GM10248 (cell line): ENCODE measurements at regions of chr2 and their contacts with region 1.

Region 1: GRCh38 chr2:127094509-127095366 is 12.2 kb downstream of the BIN1 start:
- DNase-seq: no peak
- CTCF ChIP-seq: no peak

Region 2: DNA sequence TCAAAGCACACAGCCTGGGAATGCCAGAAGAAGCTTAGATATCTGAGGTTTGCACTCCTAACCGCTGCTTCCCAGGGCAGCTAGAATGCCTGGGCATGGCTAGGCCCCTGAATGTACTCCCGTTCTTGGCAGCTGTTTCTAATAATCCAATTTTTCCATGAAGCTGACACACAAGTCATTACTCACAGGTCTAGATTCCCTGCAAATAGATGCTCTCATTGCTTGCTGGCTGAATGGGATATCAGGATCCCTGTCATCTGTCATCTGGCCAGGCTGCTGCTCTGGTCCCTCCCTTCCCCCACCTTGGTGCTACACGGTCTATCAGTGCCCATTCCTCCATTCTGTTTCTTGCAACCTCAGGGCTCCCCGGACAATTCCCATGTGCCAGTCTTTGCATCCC is 236.7 kb before region 1 on chr2:
- CTCF ChIA-PET with region 1: no interaction called
- POLR2A ChIA-PET with region 1: no interaction called
- DNase-seq: no peak
- CTCF ChIP-seq: no peak

Region 3: DNA sequence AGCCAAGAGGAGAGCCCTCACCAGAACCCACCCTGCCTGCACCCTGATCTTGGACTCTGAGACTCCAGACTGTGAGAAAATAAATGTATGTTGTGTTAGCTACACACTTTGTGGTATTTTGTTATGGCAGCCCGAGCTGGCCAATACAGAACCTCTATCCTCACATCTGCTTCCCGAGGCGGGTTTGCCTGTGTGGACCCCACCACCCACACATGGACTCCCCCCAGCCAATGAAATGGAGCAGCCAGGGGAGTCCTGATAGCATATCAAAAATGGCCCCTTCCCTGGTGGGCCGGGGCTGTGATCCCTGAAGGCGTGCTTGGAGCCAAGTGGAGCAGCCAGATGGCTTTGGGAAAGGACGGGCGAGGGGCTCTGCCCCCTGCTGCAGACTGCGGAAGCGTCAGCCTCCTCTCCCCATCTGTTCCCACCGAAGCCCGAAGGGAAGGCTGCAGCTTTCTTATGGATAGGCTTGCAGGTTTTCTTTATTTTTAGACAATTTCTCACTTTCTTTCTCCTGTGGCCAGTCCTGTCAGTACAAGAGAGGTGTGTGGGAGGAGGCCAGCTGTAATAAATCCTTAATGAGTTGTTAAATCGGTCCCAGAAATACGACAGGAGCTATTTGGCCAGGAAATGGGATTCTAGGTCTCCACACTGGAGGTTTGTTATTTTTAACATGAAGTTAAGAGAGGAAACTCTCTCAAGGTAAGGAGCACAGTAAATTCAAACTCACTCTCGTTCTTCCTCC is 161.6 kb before region 1 on chr2:
- CTCF ChIA-PET with region 1: no interaction called
- POLR2A ChIA-PET with region 1: no interaction called
- DNase-seq: no peak
- CTCF ChIP-seq: no peak

Region 4: GRCh38 chr2:126971481-126972278 is 123.1 kb before region 1 on chr2:
- CTCF ChIA-PET with region 1: no interaction called
- POLR2A ChIA-PET with region 1: no interaction called
- DNase-seq: peak; percentile 87
- CTCF ChIP-seq: peak; percentile 96

Region 5: DNA sequence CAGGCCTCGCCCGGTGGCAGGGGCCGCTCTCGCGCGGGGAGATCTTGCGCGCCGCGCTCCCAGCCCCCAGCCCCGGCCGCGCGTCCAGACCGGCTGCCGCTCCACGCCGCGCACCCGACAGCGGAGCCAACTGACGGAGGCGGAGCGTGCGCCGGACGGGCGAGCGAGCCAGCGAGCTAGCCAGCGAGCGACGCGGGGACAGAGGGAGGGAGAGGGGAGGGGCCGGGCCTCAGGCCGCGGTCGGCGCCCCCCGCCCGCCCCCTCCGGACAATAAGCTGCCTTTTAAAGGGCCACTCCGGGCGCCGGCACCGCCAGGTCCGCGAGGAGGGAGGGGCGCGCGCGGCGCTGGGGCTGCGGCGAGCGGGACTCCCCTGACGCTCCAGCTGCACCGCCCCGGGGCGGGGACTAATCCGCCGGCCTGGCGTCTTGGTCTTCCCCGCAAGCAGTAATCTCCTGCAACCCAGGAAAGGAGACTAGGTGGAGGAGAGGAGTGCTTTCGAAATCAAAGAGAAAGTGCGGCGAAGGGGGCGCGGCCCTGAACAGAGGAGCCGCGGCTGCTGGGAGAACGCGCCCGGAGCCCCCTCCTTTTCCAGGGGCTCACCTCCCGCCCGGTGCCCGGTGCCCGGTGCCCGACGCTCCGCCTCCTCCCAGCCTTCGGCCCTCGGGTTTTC is 12.3 kb after region 1 on chr2 and contains the start of gene BIN1:
- CTCF ChIA-PET with region 1: interaction called, 10 read pairs
- POLR2A ChIA-PET with region 1: interaction called, 5 read pairs
- DNase-seq: peak; percentile 88
- CTCF ChIP-seq: no peak

Region 6: DNA sequence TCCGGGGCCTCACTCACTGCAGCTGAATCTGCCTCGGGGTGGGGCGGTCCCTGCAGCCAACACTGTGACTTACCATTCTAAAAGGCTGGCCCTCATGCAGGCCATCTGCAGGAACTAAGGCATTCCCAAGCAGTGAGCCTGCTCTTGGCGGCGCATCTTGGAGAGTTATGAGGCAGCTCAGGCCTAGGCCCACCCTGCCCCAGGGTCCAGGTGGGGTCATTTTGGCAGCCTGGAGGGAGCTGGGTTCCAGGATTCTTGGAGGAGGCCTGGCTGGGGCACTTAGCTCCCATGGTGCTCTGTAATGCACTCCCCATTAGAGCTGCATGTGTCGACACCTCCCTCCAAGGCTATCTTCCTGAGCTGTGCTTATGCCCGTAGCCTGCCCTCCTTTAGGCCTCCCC is 27.0 kb after region 1 on chr2:
- CTCF ChIA-PET with region 1: no interaction called
- POLR2A ChIA-PET with region 1: no interaction called
- DNase-seq: no peak
- CTCF ChIP-seq: no peak